ENCODE measurements at regions of chr15 and their contacts with region 1.

Region 1: GRCh38 chr15:42548253-42549031 is at the starts of genes HAUS2 and LRRC57:
- DNase-seq: peak; percentile 78 to 98 (median 84)

Region 2: DNA sequence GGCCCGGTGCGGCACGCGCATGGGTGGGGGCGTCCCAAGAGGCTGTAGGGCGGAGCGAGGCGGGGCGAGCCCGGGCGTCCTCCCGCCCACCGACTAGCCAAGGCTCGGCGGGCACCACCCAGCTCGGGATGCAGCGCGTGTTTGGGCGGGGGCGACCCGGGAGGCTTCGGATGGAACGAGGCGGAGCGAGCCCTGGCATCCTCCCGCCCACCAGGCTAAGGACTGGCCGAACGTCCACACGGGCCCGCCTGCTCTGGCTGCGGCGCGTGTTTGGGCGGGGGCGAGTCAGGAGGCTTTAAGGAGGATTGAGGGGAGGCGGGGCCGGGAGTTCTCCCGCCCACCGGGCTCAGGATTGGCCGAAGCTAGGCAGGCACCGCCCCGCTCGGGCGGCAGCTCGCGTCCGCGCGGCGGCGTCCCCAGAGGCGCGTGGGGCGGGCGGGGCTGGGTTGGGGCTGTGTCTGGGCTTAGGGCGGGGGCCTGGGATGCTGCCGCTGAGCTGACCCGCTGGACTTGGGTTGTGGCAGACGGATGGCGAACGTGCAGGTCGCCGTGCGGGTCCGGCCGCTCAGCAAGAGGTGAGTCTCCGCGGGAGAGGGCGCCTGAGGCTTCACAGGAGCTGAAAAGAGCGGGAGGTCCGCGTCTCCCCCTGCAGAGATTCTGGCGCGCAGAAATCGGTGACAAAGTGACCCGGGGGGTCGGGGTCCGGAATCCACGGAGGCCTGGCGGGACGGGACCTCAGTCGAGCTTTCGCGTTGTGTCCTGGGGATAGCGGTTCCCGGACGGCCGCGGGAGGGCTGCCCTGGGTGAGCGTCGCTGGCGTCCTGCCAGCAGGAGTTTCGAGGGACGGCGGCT is 27.0 kb after region 1 on chr15 and contains the start of gene STARD9:
- intact Hi-C with region 1: loop called (anchors 1 kb)
- DNase-seq: peak; percentile 95 to 100 (median 98)

Region 3: DNA sequence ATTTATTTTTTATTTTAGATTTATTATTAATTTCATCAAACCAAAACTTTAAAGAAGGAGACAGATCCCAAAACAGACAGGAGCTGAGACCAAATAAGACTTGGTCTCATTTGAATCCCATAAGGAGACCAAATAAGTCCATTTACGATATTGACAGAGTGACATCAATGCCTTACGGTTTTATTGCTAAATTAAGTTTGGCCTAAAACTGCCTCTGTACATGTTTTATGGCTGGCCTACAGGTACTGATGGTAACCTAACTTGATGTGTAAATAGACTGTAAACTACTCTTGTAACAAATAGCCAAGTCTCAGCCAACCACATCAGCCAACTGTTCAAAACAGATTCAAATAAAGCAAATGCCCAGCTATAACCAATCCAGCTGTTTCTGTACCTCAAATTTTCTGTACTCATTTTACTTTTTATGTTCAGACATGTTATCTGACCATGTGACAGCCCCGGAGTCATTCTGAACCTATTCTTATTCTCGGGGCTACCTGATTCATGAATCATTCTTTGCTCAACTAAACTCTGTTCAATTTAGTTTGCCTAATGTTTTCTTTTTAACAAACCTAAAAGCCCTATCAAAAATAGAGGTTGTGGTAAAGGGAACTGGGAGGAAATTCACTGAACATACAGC is 277.9 kb after region 1 on chr15:
- intact Hi-C with region 1: no loop called
- DNase-seq: no peak

Measured in posterior cingulate gyrus (tissue), 11 donors.